Cardiac septum (tissue), 1 donor: ENCODE measurements at regions of chr3 and their contacts with region 1.

Region 1: DNA sequence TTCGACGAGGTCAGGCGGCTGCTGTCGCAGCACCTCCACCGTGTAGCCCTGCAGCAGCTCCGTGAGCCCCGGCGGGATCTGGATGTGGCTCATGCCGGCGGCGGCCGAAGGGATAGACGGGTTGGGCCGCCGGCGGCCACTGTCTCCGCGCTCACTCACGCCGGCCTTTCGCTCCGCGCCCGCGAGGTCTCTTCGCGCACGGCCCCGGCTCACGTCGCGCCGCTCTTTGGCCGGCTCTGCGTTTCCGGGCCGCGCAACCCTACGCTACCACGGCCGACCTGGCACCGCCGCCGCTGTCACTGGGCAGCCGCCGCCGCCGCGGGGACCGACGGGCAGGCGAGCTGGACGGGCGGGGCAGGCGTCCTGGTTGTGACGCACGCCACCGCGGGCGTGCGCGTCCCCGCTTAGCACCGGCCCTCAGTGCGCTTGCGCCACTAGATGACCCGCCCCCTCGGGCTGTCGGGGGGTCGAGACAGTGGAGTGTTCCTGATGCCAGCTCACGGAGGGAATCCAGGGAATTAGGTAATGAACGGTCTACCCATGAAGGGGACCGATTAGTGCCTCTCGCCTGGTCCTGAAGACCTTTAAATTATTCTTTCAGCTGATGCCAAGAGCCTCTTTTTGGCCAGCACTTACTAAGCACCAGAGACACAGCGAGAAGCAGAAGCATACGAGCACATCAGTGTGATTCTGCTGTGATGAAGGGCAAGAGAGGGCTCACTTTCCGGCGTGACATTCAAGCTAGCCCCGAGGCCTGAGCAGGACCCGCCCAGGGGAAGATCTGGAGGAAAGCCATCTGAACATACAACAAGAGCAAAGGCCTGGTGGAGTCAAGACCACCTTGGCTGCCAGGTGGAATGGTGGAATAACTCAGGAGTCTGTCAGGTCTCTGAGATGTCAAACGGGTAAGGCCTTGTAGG is at the start of gene PRKAR2A:
- DNase-seq: peak; percentile 95
- total RNA-seq, gene PRKAR2A: 48.1 TPM

Region 2: DNA sequence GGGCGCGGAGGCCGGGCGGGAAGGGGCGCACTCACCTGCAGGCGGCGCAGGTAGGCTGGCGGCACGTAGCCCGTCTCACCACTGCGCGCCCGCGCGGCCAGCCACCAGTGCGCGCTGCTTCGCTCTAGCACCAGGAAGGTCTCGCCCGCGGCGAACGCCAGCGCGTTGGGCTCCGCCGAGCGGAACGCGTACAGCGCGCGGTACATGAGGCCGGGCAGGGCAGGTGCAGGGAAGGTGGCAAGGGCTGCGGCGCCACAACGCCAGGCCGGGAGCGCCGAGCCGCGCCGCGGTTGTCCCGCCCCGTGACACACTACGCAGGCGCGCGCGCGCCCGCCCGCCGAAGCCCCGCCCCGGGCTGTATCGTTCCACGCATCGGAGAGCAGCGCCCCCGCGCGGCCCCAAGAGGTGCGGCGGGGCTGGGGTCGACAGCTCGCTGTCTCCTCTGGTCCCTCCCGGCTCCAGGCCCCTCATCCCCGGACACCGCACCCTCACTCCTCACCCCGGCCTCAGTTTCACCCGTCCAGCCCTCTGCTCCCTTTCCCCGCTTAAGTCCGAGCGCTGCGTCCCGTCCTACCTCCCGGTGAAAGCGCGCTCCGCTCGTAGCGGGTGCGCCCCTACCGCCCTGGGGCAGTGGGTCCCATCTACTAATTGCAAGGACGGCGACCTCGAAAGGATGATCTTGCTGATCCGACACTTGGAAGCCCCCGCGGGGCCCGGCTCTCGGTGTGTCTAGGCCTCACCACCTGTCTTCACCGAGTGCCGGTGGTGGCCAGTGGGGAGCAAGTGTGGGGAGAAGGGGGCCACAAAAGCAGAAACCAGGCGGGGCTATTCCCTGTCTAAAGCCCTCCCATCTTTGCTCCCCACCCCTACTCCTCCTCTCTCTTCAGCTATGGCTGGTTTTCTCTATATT is 161.9 kb before region 1 on chr3 and contains the start of gene NCKIPSD:
- intact Hi-C with region 1: loop called (anchors 5 kb)
- DNase-seq: peak; percentile 96
- total RNA-seq, gene NCKIPSD: 22.5 TPM

Region 3: DNA sequence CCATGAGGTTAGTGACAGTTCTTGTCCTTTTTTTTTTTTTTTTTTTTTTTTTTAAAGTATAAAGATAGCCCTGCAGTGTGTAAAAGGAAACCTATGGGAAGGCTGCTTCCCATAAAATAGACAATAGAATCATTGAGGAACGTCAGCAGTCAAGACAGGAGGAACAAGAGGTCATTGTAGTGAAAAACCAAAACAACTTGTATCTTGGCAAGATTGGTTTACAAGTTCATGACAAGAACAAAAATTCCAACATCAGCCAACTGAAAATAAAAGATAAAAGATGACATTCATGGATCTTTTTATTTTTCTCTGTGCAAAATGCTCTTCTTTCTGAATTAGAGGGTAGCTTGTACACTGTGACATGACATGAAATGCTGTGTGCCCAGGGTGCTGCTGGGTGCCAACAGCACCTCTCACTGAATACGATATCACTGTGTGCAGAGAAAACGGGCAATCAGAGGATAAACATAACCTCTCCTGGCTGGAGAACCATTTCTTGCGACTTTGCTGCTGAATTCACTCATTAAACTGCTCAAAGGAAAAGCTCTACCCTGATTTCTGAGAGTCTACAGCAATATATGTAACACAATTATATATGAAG is 100.6 kb before region 1 on chr3:
- intact Hi-C with region 1: loop called (anchors 5 kb)
- DNase-seq: no peak

Region 4: GRCh38 chr3:48784426-48785120 is 63.2 kb before region 1 on chr3:
- intact Hi-C with region 1: no loop called
- DNase-seq: no peak

Region 5: DNA sequence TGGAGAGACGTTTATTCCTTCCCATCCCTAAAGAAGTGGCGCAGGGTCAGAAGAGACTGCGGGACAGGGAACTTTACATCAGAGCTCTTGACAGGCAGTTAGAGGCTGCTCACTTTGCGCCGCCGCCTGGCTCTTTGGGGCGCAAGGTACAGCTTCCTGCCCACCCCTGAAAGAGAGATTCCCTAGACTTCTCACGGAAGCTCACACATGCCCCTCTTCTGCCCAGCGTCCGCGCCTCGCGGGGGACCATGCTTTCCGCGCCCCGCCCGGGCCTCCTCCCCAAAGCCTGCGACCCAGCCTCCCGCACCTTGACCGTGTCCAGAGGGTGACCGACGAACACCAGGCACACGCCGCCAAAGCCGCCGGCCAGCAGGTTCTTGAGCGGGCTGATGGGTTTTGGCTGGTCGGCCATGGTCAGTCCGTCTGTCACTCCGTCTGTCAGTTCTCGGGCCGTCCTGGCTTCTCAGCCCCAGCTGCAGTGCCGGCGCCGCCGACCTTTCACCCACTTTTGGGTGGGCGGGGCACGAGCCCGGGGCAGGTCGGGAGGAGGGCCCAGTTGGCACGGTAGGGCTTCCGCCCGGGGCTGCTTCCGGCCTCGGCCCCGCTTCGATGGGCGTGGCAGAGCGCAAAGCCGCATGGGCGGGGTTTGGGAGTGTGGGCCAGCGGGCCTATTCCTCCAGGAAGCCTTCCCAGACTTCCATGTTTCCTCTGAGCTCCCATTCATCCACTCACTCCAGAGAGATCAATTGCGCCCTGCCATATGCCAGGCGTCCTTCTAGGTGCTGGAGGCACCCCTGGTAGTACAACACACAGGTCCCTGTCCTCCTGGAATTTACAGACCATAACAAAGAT is 50.8 kb after region 1 on chr3 and contains the start of gene SLC25A20:
- intact Hi-C with region 1: loop called (anchors 5 kb)
- DNase-seq: peak; percentile 97
- total RNA-seq, gene SLC25A20: 36.7 TPM

Region 6: GRCh38 chr3:48918388-48919214 is 70.8 kb after region 1 on chr3 and contains the start of gene ARIH2:
- intact Hi-C with region 1: loop called (anchors 2 kb)
- DNase-seq: peak; percentile 96
- total RNA-seq, gene ARIH2: 121 TPM